ENCODE measurements at regions of chr13 and their contacts with region 1.

Region 1: GRCh38 chr13:75788481-75788981 is 152.4 kb downstream of the LMO7 start:
- DNase-seq: peak; percentile 52 to 82
- H3K4me3 ChIP-seq: no peak overlapping the region
- H3K27ac ChIP-seq: peak overlapping the region; percentile 10; the same call in 1 of the 2 replicates
- H3K4me1 ChIP-seq: 0 out of 2 replicates have a peak, but pooled peaks cover 4% of the 10 kb centered on the region
- H3K27me3 ChIP-seq: no peaks in the 10 kb centered on the region
- CTCF ChIP-seq: no peak

Region 2: DNA sequence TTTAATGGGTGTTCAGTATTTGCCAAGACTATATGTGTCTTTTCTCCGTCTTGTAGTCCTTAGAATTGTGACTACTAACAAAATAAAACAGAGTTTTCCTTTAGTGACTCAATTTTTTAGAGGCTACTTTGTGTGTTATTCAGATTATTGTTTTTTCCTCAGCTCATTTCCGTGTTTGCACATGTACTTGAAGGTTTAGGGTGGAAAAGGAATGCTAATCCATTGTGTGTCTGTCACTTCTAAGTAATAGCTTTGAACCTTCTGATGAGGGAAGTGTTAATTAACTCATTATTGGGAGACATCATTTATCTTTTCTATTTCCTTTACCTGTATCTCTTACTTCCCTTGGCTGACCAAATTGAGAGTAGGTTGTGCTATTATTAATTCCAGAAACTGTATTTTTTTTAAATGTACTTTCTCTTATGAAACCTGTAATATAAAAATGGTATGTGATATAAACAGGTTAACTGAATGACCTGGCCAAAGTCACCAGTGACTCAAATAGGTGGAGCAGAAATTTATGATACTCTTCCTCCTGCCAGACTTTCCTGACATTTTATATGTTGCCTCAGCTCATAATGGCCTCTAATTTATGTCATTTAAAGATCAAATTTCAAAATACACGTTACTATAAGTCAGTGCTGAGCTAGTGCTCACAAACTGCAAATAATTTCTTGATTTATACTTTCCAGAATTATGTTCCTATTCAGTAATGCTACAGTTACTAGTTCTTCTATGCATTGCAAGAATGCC is 63.6 kb before region 1 on chr13:
- CTCF ChIA-PET with region 1: no interaction called
- POLR2A ChIA-PET with region 1: no interaction called
- intact Hi-C with region 1: loop called (anchors 2 kb)
- DNase-seq: peak in 1 of 2 experiments; percentile 82
- H3K4me3 ChIP-seq: peak overlapping the region; percentile 25; the same call in 1 of the 2 replicates
- H3K27ac ChIP-seq: peak overlapping the region; percentile 94
- H3K4me1 ChIP-seq: peaks cover 37% of the 10 kb centered on the region
- H3K27me3 ChIP-seq: no peaks in the 10 kb centered on the region
- CTCF ChIP-seq: no peak

Region 3: GRCh38 chr13:75771818-75772217 is 16.7 kb before region 1 on chr13:
- CTCF ChIA-PET with region 1: no interaction called
- POLR2A ChIA-PET with region 1: no interaction called
- intact Hi-C with region 1: loop called (anchors 1 kb)
- DNase-seq: peak in 1 of 2 experiments; percentile 80
- H3K4me3 ChIP-seq: 0 out of 2 replicates have a peak overlapping the region, but pooled peaks have one; percentile 26
- H3K27ac ChIP-seq: peak overlapping the region; percentile 89
- H3K4me1 ChIP-seq: peaks cover 23% of the 10 kb centered on the region
- H3K27me3 ChIP-seq: no peaks in the 10 kb centered on the region
- CTCF ChIP-seq: no peak